Endothelial cell of umbilical vein (primary cell): ENCODE measurements at regions of chr12 and their contacts with region 1.

Region 1: DNA sequence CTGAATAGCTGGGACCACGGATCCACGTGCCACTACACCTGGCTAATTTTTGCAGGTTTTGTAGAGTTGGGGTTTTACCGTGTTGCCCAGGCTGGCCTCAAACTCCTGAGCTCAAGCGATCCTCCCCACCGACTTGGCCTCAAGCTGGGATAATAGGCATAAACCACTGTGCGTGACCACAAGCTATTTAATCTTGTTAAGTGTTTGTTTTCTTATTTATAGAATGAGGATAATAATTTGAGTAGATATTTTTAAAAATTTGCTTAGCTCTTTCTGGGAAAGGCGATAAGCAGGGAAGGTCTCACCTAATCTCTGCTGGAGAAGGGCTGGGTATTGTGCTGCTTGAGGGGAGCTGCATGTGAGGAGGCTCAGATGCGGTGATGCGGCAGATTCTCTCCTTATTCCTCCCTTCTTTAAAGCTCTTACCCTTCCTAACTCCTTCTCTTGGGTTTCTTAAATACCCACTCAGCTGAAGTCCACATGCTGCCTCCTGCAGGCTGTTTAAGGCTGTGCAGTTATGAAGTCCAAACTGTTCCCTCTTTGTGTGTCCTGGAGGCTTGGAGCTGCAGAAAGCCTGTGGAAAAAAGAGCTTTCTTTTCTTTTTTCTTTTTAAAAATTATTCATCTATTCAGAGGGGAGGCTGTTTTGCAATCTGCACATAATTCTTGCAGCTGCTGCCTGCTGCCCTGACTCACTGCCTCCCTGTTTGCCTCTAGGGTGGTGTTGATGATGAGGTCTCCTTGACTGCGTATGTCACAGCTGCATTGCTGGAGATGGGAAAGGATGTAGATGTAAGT is 37.9 kb downstream of the A2ML1 start:
- DNase-seq: peak; percentile 59
- H3K4me3 ChIP-seq: no peak overlapping the region
- H3K27ac ChIP-seq: no peak overlapping the region
- H3K4me1 ChIP-seq: no peaks in the 10 kb centered on the region
- H3K27me3 ChIP-seq: no peaks in the 10 kb centered on the region
- CTCF ChIP-seq: peak; percentile 66 to 70
- POLR2A ChIP-seq: no peak

Region 2: DNA sequence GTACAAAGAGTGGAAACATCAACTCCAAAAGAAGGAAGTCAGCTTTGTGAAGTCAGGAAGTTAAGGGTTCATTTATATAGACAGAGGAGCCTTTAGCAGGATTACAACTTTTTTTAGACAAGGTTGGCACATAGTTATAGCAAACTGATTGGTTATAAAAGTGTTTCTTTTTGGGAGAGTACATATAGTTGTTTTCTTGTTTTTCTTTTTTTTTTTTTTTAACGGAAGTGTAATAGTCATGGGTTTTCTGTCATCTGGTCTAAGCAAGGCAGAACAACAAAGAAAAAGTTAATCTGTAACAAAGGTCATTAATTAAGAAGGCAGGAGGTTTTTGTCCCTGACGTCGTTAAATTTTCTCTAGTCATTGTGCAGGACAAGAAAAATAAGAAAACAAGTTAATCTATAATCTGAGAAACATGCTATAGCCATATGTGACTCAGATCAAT is 184.7 kb before region 1 on chr12:
- CTCF ChIA-PET with region 1: interaction called, 66 read pairs
- POLR2A ChIA-PET with region 1: no interaction called
- dilution Hi-C with region 1: no loop called
- intact Hi-C with region 1: no loop called
- DNase-seq: peak; percentile 51
- H3K4me3 ChIP-seq: no peak overlapping the region
- H3K27ac ChIP-seq: peak overlapping the region; percentile 87
- H3K4me1 ChIP-seq: peaks cover 27% of the 10 kb centered on the region
- H3K27me3 ChIP-seq: no peaks in the 10 kb centered on the region
- CTCF ChIP-seq: no peak
- POLR2A ChIP-seq: no peak

Region 3: DNA sequence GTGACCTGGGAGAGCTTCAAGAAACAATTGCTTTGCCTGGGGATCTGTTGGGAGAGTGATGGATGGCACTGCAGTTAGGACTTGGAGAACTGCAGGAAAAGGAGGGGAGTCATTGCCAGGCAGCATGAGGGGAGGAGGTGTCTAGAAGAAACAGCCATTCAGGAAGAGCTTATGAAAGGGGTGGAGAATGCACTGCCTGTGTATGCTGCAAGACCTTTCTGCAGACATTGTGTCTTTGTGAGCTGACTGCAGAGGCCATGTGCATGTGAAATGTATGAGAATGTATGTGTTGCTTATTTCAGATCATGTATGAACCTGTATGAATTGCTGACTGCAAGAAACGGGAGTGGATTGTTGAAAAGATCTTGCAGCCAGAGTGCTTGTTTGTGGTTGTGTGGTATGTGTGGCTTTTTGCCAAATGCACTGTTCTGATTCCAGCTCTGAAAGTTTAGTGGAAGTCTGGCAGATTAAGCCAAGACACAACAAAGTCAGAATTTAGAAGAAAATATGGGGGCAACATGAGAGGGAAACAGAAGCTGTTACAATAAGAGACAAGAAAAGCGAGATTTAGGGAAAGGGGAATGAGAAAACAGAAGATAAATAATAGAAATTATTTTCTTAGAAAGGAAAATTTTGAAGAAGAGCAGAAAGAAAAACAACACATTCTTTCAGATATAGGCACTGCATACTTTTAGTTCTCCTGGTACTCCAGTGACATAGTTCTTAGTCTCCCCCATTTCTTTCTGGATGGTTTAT is 172.3 kb before region 1 on chr12:
- CTCF ChIA-PET with region 1: interaction called, 66 read pairs
- POLR2A ChIA-PET with region 1: no interaction called
- dilution Hi-C with region 1: no loop called
- intact Hi-C with region 1: no loop called
- DNase-seq: peak; percentile 97
- H3K4me3 ChIP-seq: no peak overlapping the region
- H3K27ac ChIP-seq: peak overlapping the region; percentile 34
- H3K4me1 ChIP-seq: peaks cover 32% of the 10 kb centered on the region
- H3K27me3 ChIP-seq: no peaks in the 10 kb centered on the region
- CTCF ChIP-seq: no peak
- POLR2A ChIP-seq: peak; percentile 77

Region 4: GRCh38 chr12:8844665-8845064 is 15.7 kb before region 1 on chr12:
- CTCF ChIA-PET with region 1: interaction called, 13 read pairs
- POLR2A ChIA-PET with region 1: no interaction called
- dilution Hi-C with region 1: no loop called
- intact Hi-C with region 1: no loop called
- DNase-seq: no peak
- H3K4me3 ChIP-seq: no peak overlapping the region
- H3K27ac ChIP-seq: no peak overlapping the region
- H3K4me1 ChIP-seq: no peaks in the 10 kb centered on the region
- H3K27me3 ChIP-seq: no peaks in the 10 kb centered on the region
- CTCF ChIP-seq: no peak
- POLR2A ChIP-seq: no peak

Region 5: DNA sequence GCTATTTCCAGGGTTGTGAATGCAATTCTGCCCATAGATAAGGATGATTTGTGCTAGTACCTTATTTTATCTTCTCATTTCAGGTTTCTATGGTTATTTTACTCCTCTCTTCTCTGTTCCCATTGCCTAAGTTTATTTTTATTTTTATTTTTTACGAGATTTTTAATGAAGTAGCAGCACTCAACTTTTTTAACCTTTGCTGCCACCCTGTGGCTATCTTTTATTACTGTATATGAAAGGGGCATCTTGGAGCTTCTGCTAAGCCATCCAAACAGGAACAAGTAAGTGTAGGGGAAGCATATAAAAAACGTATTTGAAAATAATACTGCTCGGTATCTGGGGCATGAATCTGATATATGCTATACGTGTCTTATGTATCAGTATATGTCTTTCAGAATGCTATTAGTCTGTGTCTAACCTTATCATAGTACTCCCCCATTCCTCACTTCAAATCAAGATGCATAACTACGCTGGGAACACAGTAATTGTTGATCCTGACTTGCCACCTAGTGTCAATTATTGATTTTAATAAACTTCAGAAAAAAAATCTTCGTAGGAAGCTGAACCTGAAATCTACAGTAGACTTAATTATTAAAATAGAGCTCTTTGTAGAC is 189.3 kb after region 1 on chr12:
- CTCF ChIA-PET with region 1: interaction called, 16 read pairs
- POLR2A ChIA-PET with region 1: no interaction called
- dilution Hi-C with region 1: no loop called
- intact Hi-C with region 1: no loop called
- DNase-seq: peak; percentile 62
- H3K4me3 ChIP-seq: no peak overlapping the region
- H3K27ac ChIP-seq: no peak overlapping the region
- H3K4me1 ChIP-seq: no peaks in the 10 kb centered on the region
- H3K27me3 ChIP-seq: peaks cover 5 to 13% of the 10 kb centered on the region in 2 experiments
- CTCF ChIP-seq: peak; percentile 13 to 27
- POLR2A ChIP-seq: no peak